ENCODE measurements at regions of chr10 and their contacts with region 1.

Region 1: GRCh38 chr10:6401562-6402348 is 178.3 kb downstream of the PRKCQ start:
- DNase-seq: peak; percentile 35 to 84 (median 49)
- ATAC-seq: peak; percentile 88
- H3K4me3 ChIP-seq: no peak overlapping the region
- H3K4me3 Mint-ChIP-seq: peak overlapping the region; percentile 30
- H3K27ac ChIP-seq: no peak overlapping the region
- H3K27ac Mint-ChIP-seq: peak overlapping the region; percentile 0
- H3K4me1 ChIP-seq: peaks cover 11% of the 10 kb centered on the region
- H3K4me1 Mint-ChIP-seq: peaks cover 29% of the 10 kb centered on the region
- H3K27me3 ChIP-seq: no peaks in the 10 kb centered on the region
- H3K27me3 Mint-ChIP-seq: no peaks in the 10 kb centered on the region
- CTCF ChIP-seq: peak; percentile 83

Region 2: DNA sequence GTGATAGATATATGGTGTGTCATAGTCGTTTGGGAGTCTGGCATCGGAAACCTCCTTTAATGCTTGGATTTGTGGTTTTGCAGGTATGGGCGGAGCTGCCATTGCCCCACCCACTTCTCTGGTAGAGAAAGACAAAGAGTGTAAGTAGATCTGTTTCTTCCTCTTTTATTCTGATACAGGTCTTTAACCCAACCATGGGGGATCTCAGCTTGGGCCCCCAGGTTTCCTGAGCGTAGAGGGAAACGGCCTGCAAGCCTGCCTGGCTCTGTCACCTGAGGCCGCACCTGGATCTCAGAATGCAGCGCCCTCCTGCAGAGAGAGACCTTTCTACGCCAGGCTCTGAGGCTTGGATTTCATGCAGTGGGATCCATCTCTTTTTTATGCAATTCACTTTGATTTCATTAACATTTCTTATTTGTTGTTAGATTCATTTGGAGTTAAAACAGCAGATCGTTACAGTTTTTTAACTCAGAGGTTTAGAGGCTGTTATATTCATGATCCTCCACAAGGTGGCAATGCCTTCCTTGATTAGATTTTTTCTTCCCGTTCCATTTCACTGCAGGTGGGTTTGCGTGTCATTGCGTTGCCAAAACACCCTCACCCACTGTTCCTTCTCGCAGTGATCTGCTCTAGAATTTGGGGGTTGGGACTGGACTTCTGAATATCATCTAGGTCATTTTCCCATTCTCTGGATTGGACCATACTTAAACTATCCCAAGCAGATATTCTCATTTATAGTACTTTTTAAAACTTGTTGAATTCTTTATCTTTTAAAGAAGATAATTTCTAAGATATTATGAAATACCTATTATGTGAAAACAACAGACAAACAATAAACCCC is 292.9 kb before region 1 on chr10:
- CTCF ChIA-PET with region 1: interaction called, 30 read pairs
- POLR2A ChIA-PET with region 1: interaction called, 4 read pairs
- intact Hi-C with region 1: loop called (anchors 1 kb)
- DNase-seq: peak in 6 of 14 experiments; percentile 17 to 83 (median 59)
- ATAC-seq: peak; percentile 86
- H3K4me3 ChIP-seq: peak overlapping the region; percentile 9
- H3K4me3 Mint-ChIP-seq: peak overlapping the region; percentile 57
- H3K27ac ChIP-seq: no peak overlapping the region
- H3K27ac Mint-ChIP-seq: peak overlapping the region; percentile 43
- H3K4me1 ChIP-seq: peaks cover 19% of the 10 kb centered on the region
- H3K4me1 Mint-ChIP-seq: peaks cover 35% of the 10 kb centered on the region
- H3K27me3 ChIP-seq: no peaks in the 10 kb centered on the region
- H3K27me3 Mint-ChIP-seq: no peaks in the 10 kb centered on the region
- CTCF ChIP-seq: peak; percentile 91

Region 3: DNA sequence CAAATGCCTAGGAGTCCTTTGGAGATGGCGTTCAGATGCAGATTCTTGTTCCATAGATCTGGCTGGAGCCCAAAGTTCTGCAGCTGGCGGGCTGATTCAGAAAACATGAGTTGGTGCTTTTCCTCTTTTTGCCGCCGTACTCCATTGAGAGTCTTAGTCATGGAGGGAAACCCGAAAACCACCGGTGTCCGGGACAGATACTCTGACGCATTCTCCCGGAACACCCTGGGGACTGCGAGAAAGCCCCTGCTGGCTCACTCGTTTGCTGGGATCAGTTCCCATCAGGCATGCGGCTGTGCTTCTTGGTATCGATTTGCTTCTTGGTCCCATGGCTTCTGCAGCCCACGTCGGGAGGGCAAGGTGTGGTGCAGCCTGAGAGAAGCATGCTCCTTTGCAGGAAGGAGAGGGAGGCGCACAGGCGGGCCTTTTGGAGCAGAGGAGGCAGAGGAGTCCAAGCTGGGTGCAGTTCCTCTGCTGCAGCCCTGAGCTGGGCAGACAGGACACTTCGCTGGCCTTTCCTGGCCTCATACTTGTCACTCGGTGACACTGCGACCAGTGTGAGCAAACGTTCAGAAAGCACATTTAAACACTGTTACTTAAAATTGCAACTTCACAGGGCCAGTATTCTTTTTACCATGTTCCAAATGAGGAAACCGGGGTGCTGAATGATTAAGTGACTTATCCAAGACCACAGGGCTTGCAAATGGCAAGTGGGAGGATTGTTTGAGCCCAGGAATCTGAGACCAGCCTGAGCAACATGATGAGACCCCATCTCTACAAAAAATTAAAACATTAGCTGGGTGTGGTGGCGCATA is 229.7 kb before region 1 on chr10:
- CTCF ChIA-PET with region 1: interaction called, 24 read pairs
- POLR2A ChIA-PET with region 1: interaction called, 12 read pairs
- intact Hi-C with region 1: loop called in 1 of 2 experiments (anchors 2 kb)
- DNase-seq: peak in 4 of 14 experiments; percentile 15 to 76 (median 57)
- ATAC-seq: no peak
- H3K4me3 ChIP-seq: no peak overlapping the region
- H3K4me3 Mint-ChIP-seq: peak overlapping the region; percentile 18
- H3K27ac ChIP-seq: no peak overlapping the region
- H3K27ac Mint-ChIP-seq: peak overlapping the region; percentile 83
- H3K4me1 ChIP-seq: peaks cover 84% of the 10 kb centered on the region
- H3K4me1 Mint-ChIP-seq: peaks cover 85% of the 10 kb centered on the region
- H3K27me3 ChIP-seq: no peaks in the 10 kb centered on the region
- H3K27me3 Mint-ChIP-seq: no peaks in the 10 kb centered on the region
- CTCF ChIP-seq: no peak

Region 4: DNA sequence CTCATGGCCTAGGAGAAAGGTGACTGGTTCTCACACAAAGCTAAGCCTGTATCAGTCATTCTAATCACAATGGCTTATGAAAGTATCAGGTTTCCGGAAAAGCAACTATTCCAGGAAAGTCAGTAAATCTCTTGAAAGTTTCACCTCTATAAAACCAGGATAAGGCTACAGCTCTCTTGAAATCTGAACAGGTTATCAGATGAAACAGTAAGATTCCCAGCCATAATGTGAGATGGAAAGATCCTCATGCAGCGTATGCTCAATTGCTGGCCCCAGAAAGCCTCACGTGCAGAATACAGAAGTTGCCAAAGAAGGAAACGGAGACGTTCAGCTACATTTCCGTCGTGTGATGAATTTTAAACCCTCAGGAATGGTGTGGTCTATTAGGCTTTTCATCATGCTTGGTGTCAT is 109.0 kb before region 1 on chr10:
- CTCF ChIA-PET with region 1: interaction called, 4 read pairs
- POLR2A ChIA-PET with region 1: interaction called, 3 read pairs
- intact Hi-C with region 1: loop called in 1 of 2 experiments (anchors 5 kb)
- DNase-seq: no peak
- ATAC-seq: no peak
- H3K4me3 ChIP-seq: no peak overlapping the region
- H3K4me3 Mint-ChIP-seq: no peak overlapping the region
- H3K27ac ChIP-seq: no peak overlapping the region
- H3K27ac Mint-ChIP-seq: peak overlapping the region; percentile 86
- H3K4me1 ChIP-seq: peaks cover 13% of the 10 kb centered on the region
- H3K4me1 Mint-ChIP-seq: peaks cover 41% of the 10 kb centered on the region
- H3K27me3 ChIP-seq: no peaks in the 10 kb centered on the region
- H3K27me3 Mint-ChIP-seq: no peaks in the 10 kb centered on the region
- CTCF ChIP-seq: no peak

Region 5: DNA sequence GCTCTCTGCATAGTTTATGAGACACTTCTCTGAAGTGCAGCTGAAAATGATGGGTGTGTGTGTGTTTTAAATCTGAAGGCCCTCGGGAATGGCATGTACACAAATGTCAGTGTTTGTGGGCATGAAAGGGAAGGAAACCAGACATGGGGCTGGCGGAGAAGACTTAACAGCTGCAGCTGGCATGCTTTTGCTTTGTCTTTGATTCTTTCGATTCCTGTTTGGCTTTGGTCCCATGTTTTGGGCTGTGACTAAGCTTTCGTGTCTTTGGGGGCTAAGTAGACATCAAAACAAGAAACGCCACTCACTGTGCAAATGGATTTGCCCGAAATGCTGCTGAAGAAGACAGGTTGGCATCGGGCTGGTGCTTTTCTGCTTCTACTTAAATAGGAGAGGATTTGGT is 19.7 kb before region 1 on chr10:
- CTCF ChIA-PET with region 1: interaction called, 14 read pairs
- POLR2A ChIA-PET with region 1: no interaction called
- intact Hi-C with region 1: no loop called
- DNase-seq: peak in 13 of 14 experiments; percentile 7 to 71 (median 52)
- ATAC-seq: peak; percentile 91
- H3K4me3 ChIP-seq: peak overlapping the region; percentile 12
- H3K4me3 Mint-ChIP-seq: peak overlapping the region; percentile 67
- H3K27ac ChIP-seq: no peak overlapping the region
- H3K27ac Mint-ChIP-seq: peak overlapping the region; percentile 55
- H3K4me1 ChIP-seq: peaks cover 13% of the 10 kb centered on the region
- H3K4me1 Mint-ChIP-seq: peaks cover 20% of the 10 kb centered on the region
- H3K27me3 ChIP-seq: no peaks in the 10 kb centered on the region
- H3K27me3 Mint-ChIP-seq: no peaks in the 10 kb centered on the region
- CTCF ChIP-seq: no peak

Region 6: DNA sequence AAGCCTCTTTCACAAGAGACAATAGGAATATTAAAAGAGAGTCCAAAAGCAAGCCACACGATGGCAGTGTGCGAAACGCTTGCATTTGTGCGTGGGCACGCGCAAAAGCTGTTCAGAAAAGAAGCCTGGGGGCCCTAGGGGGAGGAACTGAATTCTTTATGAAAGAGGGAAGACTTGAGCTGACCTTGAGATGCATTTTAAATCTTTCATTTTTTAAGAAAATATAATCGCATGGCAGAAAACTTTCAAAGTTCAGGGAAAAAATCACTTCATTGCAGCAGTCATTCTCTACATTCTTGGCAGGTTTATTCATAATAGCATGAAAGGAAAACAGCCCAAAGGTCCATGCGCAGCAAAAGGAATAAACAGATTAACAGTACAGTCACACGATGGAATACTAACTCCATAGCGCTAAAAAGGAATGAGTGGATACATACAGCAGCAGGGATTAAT is 384.9 kb after region 1 on chr10:
- CTCF ChIA-PET with region 1: no interaction called
- POLR2A ChIA-PET with region 1: no interaction called
- intact Hi-C with region 1: no loop called
- DNase-seq: no peak
- ATAC-seq: no peak
- H3K4me3 ChIP-seq: no peak overlapping the region
- H3K4me3 Mint-ChIP-seq: no peak overlapping the region
- H3K27ac ChIP-seq: no peak overlapping the region
- H3K27ac Mint-ChIP-seq: no peak overlapping the region
- H3K4me1 ChIP-seq: no peaks in the 10 kb centered on the region
- H3K4me1 Mint-ChIP-seq: no peaks in the 10 kb centered on the region
- H3K27me3 ChIP-seq: peaks cover 3% of the 10 kb centered on the region in 2 experiments
- H3K27me3 Mint-ChIP-seq: peaks cover 26% of the 10 kb centered on the region
- CTCF ChIP-seq: no peak

Measured in CD4-positive, alpha-beta T cell (primary cell).